ENCODE measurements at regions of chr2 and their contacts with region 1.

Region 1: DNA sequence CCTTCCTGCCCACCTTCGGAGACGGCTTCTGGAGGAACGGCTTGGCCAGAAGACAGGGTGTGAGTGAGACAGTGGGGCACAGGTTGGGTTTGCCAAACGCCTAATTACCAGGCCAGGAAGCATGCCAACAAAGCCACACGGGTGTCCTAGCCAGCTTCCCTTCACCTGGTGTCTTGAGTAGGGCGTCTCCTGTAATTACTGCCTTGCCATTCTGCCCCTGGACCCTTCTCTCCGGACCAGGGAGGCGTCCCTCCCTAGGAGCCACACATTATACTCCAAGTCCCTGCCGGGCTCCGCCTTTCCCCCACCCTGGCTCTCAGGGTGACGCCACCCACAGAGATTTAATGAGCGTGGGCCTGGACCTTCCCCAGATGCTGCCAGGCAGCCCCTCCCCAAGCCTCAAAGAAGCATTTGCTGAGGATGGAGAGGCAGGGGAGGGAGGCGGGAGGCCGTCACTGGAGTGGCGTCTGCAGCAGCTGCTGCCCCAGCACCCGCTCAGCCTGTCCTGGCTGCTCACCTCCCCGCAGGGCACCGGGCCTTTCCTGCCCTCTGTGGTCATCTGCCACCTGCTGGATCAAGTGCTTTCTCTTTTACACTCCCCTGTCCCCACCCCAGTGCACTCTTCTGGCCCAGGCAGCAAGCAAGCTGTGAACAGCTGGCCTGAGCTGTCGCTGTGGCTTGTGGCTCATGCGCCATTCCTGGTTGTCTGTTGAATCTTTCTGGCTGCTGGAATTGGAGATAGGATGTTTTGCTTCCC is 20.7 kb downstream of the FOSL2 start:
- DNase-seq: no peak
- ATAC-seq: no peak
- H3K4me3 Mint-ChIP-seq: no peak overlapping the region
- H3K27ac Mint-ChIP-seq: peak overlapping the region; percentile 39 to 98 (median 70)
- H3K4me1 Mint-ChIP-seq: peaks cover 23 to 59% (median 50%) of the 10 kb centered on the region in 4 donors
- H3K27me3 Mint-ChIP-seq: no peaks in the 10 kb centered on the region

Region 2: DNA sequence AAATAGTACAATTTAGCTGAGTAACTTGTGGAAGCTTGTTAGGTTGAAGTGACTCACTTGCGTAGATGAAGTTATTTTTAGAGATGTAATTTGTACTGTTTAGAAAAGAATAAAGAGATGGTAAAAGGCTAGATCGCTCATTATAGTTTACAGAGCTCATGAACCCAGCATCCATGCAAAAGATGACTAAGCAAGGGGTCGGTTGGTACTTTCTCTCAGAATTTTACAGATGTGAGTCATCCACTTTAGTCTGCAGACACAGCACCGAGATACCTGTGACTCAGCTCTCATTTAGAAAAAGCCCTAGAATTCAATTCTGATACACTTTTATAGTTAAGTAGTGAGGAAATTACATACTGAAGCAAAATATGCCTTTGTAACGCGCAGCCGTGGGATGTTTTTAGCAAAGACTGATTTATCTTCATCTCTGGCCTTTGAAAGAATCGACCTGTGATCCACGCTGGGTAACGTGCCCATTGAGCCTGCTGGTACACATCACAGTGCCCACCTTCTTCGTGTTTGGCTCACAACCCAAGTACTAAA is 137.2 kb before region 1 on chr2:
- POLR2A ChIA-PET with region 1: no interaction called
- DNase-seq: no peak
- ATAC-seq: no peak
- H3K4me3 Mint-ChIP-seq: no peak overlapping the region
- H3K27ac Mint-ChIP-seq: no peak overlapping the region
- H3K4me1 Mint-ChIP-seq: peaks cover 1 to 27% (median 7%) of the 10 kb centered on the region in 4 donors
- H3K27me3 Mint-ChIP-seq: no peaks in the 10 kb centered on the region

Region 3: DNA sequence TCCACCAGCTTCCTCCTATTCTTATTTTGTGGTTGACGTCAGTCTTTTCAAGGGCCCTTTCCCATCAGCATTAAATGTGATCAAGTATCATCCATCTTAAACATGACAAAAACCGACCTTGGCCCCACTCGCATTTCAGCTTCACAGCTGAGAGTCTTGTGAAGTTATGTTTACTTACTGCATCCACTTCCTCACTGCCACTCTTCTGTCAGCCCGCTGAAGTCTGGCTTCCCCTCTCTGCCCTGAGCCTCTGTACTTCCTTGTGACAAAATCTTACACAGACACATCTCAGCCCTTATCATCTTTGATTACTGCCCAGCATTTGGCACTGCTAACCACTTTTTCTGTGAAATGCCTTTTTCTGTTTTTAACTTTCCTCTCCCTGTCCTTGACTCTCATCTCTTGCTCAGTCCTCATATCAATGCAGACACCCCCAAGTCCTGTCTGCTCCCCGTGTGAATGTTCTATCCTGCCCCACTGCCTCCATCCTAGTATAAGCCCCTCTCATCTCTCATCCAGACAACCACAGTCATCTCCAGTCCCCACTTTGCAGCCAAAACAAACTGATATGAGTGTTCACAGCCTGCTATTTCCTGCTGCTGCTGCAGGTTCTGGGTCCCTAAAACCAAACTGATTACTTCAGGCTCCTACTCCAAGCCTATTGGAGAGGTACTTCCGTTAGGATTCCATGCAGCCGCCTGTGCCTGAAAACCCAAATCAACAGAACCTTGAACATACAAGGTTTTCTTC is 10.7 kb after region 1 on chr2:
- POLR2A ChIA-PET with region 1: interaction called, 13 read pairs
- DNase-seq: peak in 8 of 10 donors; percentile 22 to 71 (median 58)
- ATAC-seq: peak; percentile 86 to 93
- H3K4me3 Mint-ChIP-seq: peak overlapping the region; percentile 69 to 88 (median 82)
- H3K27ac Mint-ChIP-seq: peak overlapping the region; percentile 96 to 100 (median 98)
- H3K4me1 Mint-ChIP-seq: peaks cover 27 to 56% (median 45%) of the 10 kb centered on the region in 4 donors
- H3K27me3 Mint-ChIP-seq: no peaks in the 10 kb centered on the region

Region 4: DNA sequence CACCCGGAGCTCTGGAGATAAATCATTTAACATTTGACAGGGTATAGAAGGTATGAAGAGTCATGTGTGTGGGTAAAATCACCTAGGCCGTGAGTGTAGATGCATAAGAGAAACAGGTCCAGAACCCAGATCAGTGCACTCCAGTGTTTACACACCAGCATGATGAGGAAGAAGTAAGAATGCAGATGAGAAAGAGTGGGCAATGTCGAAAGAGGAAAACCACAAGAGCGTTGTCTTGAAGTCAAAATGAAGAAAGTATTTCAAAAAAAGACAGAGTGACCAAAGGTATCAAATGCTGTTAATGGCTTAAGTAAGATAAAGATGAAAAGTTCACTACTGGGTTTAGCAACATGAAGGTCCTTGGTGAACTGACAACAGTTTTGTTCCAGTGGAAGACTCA is 50.6 kb after region 1 on chr2:
- POLR2A ChIA-PET with region 1: no interaction called
- DNase-seq: no peak
- ATAC-seq: no peak
- H3K4me3 Mint-ChIP-seq: no peak overlapping the region
- H3K27ac Mint-ChIP-seq: no peak overlapping the region
- H3K4me1 Mint-ChIP-seq: peaks cover 4 to 8% (median 6%) of the 10 kb centered on the region in 4 donors
- H3K27me3 Mint-ChIP-seq: peaks cover 0 to 14% (median 1%) of the 10 kb centered on the region in 5 donors

Region 5: GRCh38 chr2:28649481-28650214 is 236.3 kb after region 1 on chr2:
- POLR2A ChIA-PET with region 1: no interaction called
- DNase-seq: no peak
- ATAC-seq: no peak
- H3K4me3 Mint-ChIP-seq: peak overlapping the region in 1 of 10 donors; percentile 16
- H3K27ac Mint-ChIP-seq: peak overlapping the region in 5 of 10 donors; percentile 8 to 72 (median 47)
- H3K4me1 Mint-ChIP-seq: peaks cover 0 to 5% (median 1%) of the 10 kb centered on the region in 4 donors
- H3K27me3 Mint-ChIP-seq: no peaks in the 10 kb centered on the region

Measured in naive thymus-derived CD8-positive, alpha-beta T cell (primary cell).